CD4-positive, alpha-beta T cell (primary cell): ENCODE measurements at regions of chr5 and their contacts with region 1.

Region 1: DNA sequence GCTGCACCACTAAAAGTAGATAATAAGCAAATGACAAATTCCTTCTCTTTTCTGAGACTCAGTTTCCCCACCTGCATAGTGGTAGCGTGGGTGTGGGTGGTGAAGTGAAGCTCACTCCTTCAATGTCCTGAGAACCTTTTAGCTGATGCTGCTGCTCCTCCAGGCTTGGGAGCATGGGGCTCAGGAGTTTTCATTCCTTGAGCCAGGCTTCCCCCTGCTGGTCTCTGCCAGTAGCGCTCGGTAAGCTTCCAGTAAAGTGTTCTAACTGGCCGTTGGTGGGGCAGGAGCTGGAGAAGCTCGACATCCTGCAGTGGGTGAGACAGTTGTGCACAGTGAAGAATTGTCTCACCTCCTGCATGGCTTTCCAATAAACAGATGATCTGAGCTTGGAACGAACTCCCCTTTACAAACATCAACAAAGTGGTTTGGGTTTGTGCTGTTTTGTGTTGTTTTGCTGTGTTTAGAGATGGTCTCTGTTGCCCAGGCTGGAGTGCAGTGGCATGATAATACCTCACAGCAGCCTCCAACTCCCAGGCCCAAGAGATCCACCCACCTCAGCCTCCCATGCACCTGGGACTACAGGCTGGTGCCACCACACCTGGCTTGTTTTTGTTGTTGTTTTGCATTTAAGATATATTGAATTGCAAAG is 34.6 kb downstream of the SPARC start:
- DNase-seq: peak; percentile 27 to 85 (median 64)
- ATAC-seq: peak; percentile 91
- H3K4me3 ChIP-seq: no peak overlapping the region
- H3K4me3 Mint-ChIP-seq: no peak overlapping the region
- H3K27ac ChIP-seq: no peak overlapping the region
- H3K27ac Mint-ChIP-seq: no peak overlapping the region
- H3K4me1 ChIP-seq: peaks cover 5% of the 10 kb centered on the region
- H3K4me1 Mint-ChIP-seq: no peaks in the 10 kb centered on the region
- H3K27me3 ChIP-seq: peaks cover 0 to 2% of the 10 kb centered on the region in 2 experiments
- H3K27me3 Mint-ChIP-seq: peaks cover 5% of the 10 kb centered on the region
- CTCF ChIP-seq: peak; percentile 87

Region 2: GRCh38 chr5:151315998-151316597 is 336.0 kb before region 1 on chr5:
- CTCF ChIA-PET with region 1: no interaction called
- POLR2A ChIA-PET with region 1: no interaction called
- intact Hi-C with region 1: loop called in 1 of 2 experiments (anchors 5 kb)
- DNase-seq: peak in 13 of 14 experiments; percentile 8 to 60 (median 44)
- ATAC-seq: no peak
- H3K4me3 ChIP-seq: no peak overlapping the region
- H3K4me3 Mint-ChIP-seq: no peak overlapping the region
- H3K27ac ChIP-seq: no peak overlapping the region
- H3K27ac Mint-ChIP-seq: no peak overlapping the region
- H3K4me1 ChIP-seq: no peaks in the 10 kb centered on the region
- H3K4me1 Mint-ChIP-seq: no peaks in the 10 kb centered on the region
- H3K27me3 ChIP-seq: no peaks in the 10 kb centered on the region
- H3K27me3 Mint-ChIP-seq: peaks cover 13% of the 10 kb centered on the region
- CTCF ChIP-seq: peak; percentile 71

Region 3: DNA sequence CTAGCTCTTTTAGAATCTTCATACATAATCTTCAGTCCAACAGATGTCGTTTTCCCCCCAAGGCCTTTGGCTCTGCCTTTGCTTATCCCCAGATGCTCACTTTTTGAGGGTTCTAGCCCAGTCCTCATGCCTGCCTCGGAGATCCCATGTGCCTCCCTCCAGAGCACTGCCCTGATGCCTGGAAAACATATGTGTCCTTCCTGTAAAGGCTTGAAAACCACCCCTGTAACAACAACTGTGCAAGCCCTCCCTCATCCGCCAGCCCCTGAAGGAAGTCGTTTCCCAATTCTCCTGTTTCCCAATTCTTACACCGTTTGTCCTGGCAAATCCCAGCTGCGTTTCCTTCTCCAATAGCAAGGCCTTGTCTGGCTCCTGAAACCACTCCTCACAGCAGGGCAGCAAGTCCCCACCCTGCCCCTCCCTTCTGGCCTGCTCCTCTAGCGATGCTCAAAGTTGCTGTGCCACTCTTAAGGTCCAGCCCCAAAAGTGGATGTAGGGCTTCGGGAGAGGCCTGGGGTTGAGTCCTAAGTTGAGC is 152.6 kb before region 1 on chr5:
- CTCF ChIA-PET with region 1: no interaction called
- POLR2A ChIA-PET with region 1: no interaction called
- intact Hi-C with region 1: loop called in 1 of 2 experiments (anchors 2 kb)
- DNase-seq: no peak
- ATAC-seq: no peak
- H3K4me3 ChIP-seq: no peak overlapping the region
- H3K4me3 Mint-ChIP-seq: no peak overlapping the region
- H3K27ac ChIP-seq: no peak overlapping the region
- H3K27ac Mint-ChIP-seq: no peak overlapping the region
- H3K4me1 ChIP-seq: peaks cover 6% of the 10 kb centered on the region
- H3K4me1 Mint-ChIP-seq: peaks cover 6% of the 10 kb centered on the region
- H3K27me3 ChIP-seq: no peaks in the 10 kb centered on the region
- H3K27me3 Mint-ChIP-seq: no peaks in the 10 kb centered on the region
- CTCF ChIP-seq: no peak

Region 4: GRCh38 chr5:151523335-151523734 is 128.8 kb before region 1 on chr5:
- CTCF ChIA-PET with region 1: interaction called, 4 read pairs
- POLR2A ChIA-PET with region 1: no interaction called
- intact Hi-C with region 1: loop called in 1 of 2 experiments (anchors 1 kb)
- DNase-seq: peak in 8 of 14 experiments; percentile 5 to 58 (median 26)
- ATAC-seq: peak; percentile 54
- H3K4me3 ChIP-seq: no peak overlapping the region
- H3K4me3 Mint-ChIP-seq: no peak overlapping the region
- H3K27ac ChIP-seq: no peak overlapping the region
- H3K27ac Mint-ChIP-seq: no peak overlapping the region
- H3K4me1 ChIP-seq: no peaks in the 10 kb centered on the region
- H3K4me1 Mint-ChIP-seq: no peaks in the 10 kb centered on the region
- H3K27me3 ChIP-seq: no peaks in the 10 kb centered on the region
- H3K27me3 Mint-ChIP-seq: no peaks in the 10 kb centered on the region
- CTCF ChIP-seq: peak; percentile 34